Activated CD4-positive, alpha-beta T cell treated with anti-CD3 and anti-CD28 coated beads, Interleukin-2, amount 10 ng/mL, durations not matched to agents 7 days and 5 days (primary cell): ENCODE measurements at regions of chr1 and their contacts with region 1.

Region 1: GRCh38 chr1:183915625-183916510 is 110.9 kb downstream of the RGL1 start:
- DNase-seq: peak; percentile 84
- H3K4me3 Mint-ChIP-seq: no peak overlapping the region
- H3K27ac Mint-ChIP-seq: no peak overlapping the region
- H3K4me1 Mint-ChIP-seq: peaks cover 17% of the 10 kb centered on the region
- H3K27me3 Mint-ChIP-seq: no peaks in the 10 kb centered on the region

Region 2: DNA sequence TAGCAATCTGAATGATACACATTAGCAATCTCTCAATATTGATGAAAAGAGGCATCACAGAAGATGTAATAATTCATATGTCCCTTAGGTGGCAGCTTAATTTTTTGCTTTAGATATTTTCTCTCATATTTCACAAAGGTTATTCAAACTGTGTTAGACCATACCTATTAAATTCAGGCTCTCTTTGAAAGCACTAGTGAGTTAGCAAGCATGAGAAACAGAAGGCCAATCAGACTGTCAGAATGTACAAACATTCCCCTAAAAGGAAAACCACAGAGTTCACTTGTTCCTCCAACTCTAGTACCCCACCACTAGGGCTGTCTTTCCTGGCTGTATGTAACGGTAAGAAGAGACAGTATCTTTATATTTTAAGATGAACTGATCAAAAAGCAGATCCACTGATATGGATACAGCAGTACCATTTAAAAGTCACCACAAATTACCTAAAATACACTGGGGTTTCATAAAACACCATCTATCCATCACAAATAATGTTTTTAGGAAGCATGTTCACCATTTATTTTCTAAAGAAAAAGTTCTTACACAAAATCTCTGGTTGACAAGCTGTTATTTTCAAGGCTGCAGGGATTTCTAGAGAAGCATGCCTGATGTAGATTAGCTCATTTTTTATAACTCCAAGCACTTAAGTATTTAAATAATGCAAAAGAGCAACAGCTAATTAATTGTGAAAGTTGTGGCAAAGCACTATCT is 282.1 kb before region 1 on chr1:
- CTCF ChIA-PET with region 1: interaction called, 10 read pairs
- POLR2A ChIA-PET with region 1: no interaction called
- DNase-seq: peak; percentile 52
- H3K4me3 Mint-ChIP-seq: peak overlapping the region; percentile 100
- H3K27ac Mint-ChIP-seq: peak overlapping the region; percentile 93
- H3K4me1 Mint-ChIP-seq: peaks cover 48% of the 10 kb centered on the region
- H3K27me3 Mint-ChIP-seq: peaks cover 14% of the 10 kb centered on the region

Region 3: GRCh38 chr1:183655562-183656075 is 260.2 kb before region 1 on chr1:
- CTCF ChIA-PET with region 1: interaction called, 29 read pairs
- POLR2A ChIA-PET with region 1: interaction called, 3 read pairs
- DNase-seq: peak; percentile 78
- H3K4me3 Mint-ChIP-seq: no peak overlapping the region
- H3K27ac Mint-ChIP-seq: no peak overlapping the region
- H3K4me1 Mint-ChIP-seq: peaks cover 36% of the 10 kb centered on the region
- H3K27me3 Mint-ChIP-seq: peaks cover under 1% of the 10 kb centered on the region

Region 4: DNA sequence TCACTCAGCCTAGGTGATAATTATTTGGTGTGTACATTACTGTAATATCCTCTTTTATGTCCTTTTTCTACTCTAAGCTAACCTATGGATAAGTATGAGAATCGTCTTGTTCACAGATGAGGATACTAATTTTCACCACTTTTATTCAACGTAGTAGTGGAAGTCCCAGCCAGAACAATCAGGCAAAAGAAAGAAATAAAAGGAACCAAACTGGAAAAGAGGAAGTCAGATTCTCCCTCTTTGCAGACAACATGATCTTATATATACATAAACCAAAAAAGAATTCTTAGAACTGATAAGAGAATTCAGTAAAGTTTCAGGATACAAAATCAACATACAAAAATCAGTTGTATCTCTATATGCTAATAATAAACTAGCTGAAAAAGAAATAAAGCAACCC is 123.6 kb before region 1 on chr1:
- CTCF ChIA-PET with region 1: no interaction called
- POLR2A ChIA-PET with region 1: no interaction called
- DNase-seq: no peak
- H3K4me3 Mint-ChIP-seq: no peak overlapping the region
- H3K27ac Mint-ChIP-seq: no peak overlapping the region
- H3K4me1 Mint-ChIP-seq: no peaks in the 10 kb centered on the region
- H3K27me3 Mint-ChIP-seq: peaks cover 4% of the 10 kb centered on the region

Region 5: GRCh38 chr1:183905508-183906113 is 10.3 kb before region 1 on chr1:
- CTCF ChIA-PET with region 1: interaction called, 14 read pairs
- POLR2A ChIA-PET with region 1: no interaction called
- DNase-seq: no peak
- H3K4me3 Mint-ChIP-seq: no peak overlapping the region
- H3K27ac Mint-ChIP-seq: no peak overlapping the region
- H3K4me1 Mint-ChIP-seq: peaks cover 3% of the 10 kb centered on the region
- H3K27me3 Mint-ChIP-seq: no peaks in the 10 kb centered on the region

Region 6: DNA sequence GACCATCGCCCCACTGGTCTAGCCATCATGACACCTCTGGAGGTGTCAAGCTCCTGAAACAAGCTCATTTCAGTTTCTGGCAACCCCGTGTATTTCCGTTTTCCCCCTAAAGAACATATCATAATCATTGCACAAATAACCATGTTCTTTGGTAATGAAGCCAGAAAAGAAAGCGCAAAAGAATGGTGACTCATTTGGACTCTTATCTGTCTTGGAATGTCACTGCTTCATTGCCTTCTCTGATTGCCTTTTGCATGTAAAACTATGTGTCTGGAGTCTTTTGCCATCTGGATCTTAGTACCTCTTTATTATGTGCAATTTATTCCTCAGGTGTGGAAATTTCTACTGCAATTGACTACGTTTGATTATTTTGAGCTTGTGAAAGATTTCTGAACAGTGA is 11.1 kb after region 1 on chr1:
- CTCF ChIA-PET with region 1: interaction called, 11 read pairs
- POLR2A ChIA-PET with region 1: no interaction called
- DNase-seq: no peak
- H3K4me3 Mint-ChIP-seq: no peak overlapping the region
- H3K27ac Mint-ChIP-seq: no peak overlapping the region
- H3K4me1 Mint-ChIP-seq: no peaks in the 10 kb centered on the region
- H3K27me3 Mint-ChIP-seq: no peaks in the 10 kb centered on the region

Region 7: DNA sequence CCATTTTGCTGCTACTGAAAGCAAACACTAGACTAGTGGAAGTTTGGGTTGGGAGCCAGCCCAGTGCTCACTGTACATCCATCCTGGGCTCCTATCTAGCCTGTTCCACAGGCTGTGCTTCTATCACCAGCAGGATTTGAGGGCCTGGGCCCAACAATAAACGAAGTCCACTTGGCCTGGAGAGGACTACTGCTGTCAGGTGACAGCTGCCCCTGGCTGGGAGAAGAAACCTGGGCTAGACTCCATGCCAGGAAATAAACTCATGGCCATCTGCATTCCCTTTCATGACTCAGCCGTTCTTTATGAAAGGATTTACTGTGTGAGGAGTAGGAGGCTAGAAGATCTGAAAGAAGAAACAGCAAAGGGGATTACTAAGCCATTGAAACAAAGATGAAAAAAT is 86.2 kb after region 1 on chr1:
- CTCF ChIA-PET with region 1: no interaction called
- POLR2A ChIA-PET with region 1: no interaction called
- DNase-seq: no peak
- H3K4me3 Mint-ChIP-seq: no peak overlapping the region
- H3K27ac Mint-ChIP-seq: no peak overlapping the region
- H3K4me1 Mint-ChIP-seq: no peaks in the 10 kb centered on the region
- H3K27me3 Mint-ChIP-seq: peaks cover 2% of the 10 kb centered on the region

Region 8: DNA sequence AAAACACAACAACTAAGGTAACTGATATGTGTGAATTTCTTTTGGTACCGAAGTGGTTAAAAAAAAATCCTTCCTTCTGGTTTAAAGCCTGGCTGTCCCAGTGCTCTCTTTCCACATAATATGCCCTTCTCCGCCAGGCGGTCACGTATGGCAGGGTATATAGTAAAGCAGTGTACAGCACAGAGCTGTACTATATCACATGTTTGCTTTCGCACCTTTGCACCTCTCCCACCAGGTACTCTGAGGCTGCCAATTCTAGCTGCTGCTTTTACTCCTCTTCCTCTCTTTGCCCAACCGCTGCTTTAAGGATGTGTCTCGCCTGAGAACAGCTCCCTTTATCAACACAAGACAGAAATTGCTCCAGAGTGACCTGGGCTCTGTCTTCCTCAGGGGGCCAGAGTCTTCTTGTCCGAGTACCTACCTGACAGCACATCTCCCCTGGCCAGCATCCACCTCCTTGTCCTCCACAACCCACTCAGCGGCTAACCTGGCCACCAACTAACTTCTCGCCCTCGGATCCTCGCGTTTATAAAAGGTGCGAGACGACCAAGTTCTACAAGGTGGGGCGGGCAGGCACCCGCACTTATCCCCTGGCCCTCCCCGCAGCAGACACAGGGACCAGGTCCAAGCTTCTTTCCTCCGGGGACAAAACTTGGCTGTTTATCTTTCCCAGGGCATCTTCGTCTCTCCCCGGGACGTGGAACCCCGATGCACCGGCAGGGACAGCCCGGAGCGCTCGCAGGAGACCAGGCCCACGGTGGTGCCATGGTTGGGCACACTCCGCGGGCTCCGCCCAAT is 120.0 kb after region 1 on chr1:
- CTCF ChIA-PET with region 1: no interaction called
- POLR2A ChIA-PET with region 1: no interaction called
- DNase-seq: no peak
- H3K4me3 Mint-ChIP-seq: peak overlapping the region; percentile 34
- H3K27ac Mint-ChIP-seq: no peak overlapping the region
- H3K4me1 Mint-ChIP-seq: peaks cover 17% of the 10 kb centered on the region
- H3K27me3 Mint-ChIP-seq: peaks cover 81% of the 10 kb centered on the region